ENCODE measurements at regions of chr2 and their contacts with region 1.

Region 1: DNA sequence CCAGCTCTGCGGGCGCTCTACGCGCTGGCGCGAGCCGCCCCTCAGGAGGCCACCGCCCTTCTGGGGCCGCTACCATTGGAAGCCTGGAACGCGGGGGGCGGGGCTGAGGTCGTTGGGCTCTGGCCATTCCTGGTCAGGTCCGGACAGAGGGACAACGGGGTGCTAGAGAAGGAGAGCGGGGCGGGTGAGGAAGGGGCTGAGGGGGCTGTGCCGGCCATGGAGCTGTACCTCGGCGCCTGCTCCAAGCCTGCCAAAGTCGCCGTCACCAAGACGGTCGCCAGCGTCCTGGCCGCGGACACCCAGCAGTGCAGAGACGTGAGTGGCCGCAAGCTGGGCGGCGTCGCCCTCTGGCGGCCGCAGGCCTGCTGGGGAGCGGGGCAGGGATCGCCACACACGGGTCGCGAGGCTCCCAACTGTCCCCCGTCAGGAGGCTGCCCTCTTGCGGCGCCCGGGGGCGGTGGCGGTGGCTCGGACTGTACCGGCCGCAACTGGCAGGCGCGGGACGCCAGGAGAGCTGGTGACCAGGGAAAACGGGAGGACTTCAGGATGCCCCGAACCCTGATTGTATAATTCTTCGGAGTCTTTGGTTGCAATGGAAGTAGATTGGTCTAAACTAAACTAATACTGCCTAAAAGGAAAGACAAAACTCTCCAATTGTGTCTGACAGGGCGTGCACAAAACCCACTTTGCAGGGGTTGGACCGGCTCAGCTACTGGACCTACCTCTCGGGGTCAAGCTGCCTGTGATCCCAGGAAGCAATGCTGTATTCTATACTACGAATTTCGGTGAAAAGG is at the start of gene FSIP2:
- DNase-seq: peak; percentile 89 to 98
- H3K4me3 ChIP-seq: peak within 1 kb of the TSS; percentile 50 to 75 (median 61)
- H3K27ac ChIP-seq: no peak within 1 kb of the TSS; the same call in 1 of the 2 replicates
- H3K4me1 ChIP-seq: no peaks in the 10 kb centered on the region; a peak in 3 of 7 replicates
- H3K27me3 ChIP-seq: no peaks in the 10 kb centered on the region; a peak in 1 of 7 replicates
- CTCF ChIP-seq: peak; percentile 100
- EP300 ChIP-seq: 0 out of 3 replicates have a peak, but pooled peaks of 1 of the 2 experiments have one; percentile 50
- POLR2A ChIP-seq: peak in 1 of 2 experiments; percentile 29; a peak in 1 of 3 replicates
- RAD21 ChIP-seq: peak; percentile 98
- total RNA-seq, gene FSIP2: 1.4 and 1.7 TPM in 2 replicates

Region 2: GRCh38 chr2:185208261-185208660 is 530.6 kb before region 1 on chr2:
- CTCF ChIA-PET with region 1: interaction called, 42 read pairs
- POLR2A ChIA-PET with region 1: no interaction called
- DNase-seq: peak; percentile 23 to 65
- H3K4me3 ChIP-seq: no peak overlapping the region
- H3K27ac ChIP-seq: no peak overlapping the region
- H3K4me1 ChIP-seq: no peaks in the 10 kb centered on the region
- H3K27me3 ChIP-seq: no peaks in the 10 kb centered on the region
- CTCF ChIP-seq: peak; percentile 58 to 84 (median 75)
- EP300 ChIP-seq: no peak
- POLR2A ChIP-seq: no peak
- RAD21 ChIP-seq: peak; percentile 96

Region 3: DNA sequence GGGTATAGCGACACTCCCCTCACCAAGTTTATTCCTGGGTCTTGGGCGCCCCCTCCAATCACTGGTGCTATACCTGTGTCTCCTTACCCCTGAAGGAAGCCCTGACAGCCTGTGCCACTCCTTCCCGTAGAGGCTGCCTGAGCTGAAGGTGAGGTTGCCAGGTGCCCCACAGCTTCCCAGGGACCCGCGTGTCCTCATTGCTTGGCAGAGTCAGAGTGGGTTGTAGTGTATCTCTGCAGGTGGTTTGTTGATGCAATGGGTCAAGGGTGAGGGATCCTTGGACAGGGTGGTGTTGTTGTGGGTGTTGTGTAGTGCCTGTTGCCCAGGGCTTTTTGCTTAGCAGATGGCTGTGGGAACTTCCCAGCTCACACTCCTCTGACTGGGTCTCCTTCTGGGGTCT is 439.0 kb before region 1 on chr2:
- CTCF ChIA-PET with region 1: interaction called, 89 read pairs
- POLR2A ChIA-PET with region 1: no interaction called
- DNase-seq: no peak
- H3K4me3 ChIP-seq: no peak overlapping the region
- H3K27ac ChIP-seq: no peak overlapping the region
- H3K4me1 ChIP-seq: no peaks in the 10 kb centered on the region
- H3K27me3 ChIP-seq: no peaks in the 10 kb centered on the region
- CTCF ChIP-seq: no peak
- EP300 ChIP-seq: no peak
- POLR2A ChIP-seq: no peak
- RAD21 ChIP-seq: no peak

Region 4: DNA sequence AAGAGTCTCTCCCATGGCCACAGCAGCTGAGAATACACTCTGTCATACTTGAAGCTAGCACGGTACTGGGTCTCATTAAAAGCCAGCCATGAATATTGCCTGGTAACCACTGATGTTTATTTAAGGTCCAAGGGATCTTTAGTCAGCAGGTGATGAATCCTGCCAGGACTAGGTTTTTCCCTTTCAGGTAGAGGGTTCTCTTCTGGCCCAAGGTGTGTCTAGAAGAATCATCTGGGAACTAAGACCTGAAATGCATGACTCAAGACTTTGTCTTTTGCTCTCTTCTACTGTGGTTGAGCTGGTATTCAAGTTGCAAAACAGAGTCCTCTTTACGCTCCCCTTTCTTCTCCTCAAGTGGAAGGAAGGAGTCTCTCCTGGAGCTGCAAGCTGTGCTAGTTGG is 400.8 kb before region 1 on chr2:
- CTCF ChIA-PET with region 1: interaction called, 47 read pairs
- POLR2A ChIA-PET with region 1: no interaction called
- DNase-seq: no peak
- H3K4me3 ChIP-seq: no peak overlapping the region
- H3K27ac ChIP-seq: no peak overlapping the region
- H3K4me1 ChIP-seq: no peaks in the 10 kb centered on the region
- H3K27me3 ChIP-seq: no peaks in the 10 kb centered on the region
- CTCF ChIP-seq: no peak
- EP300 ChIP-seq: no peak
- POLR2A ChIP-seq: no peak
- RAD21 ChIP-seq: no peak

Region 5: DNA sequence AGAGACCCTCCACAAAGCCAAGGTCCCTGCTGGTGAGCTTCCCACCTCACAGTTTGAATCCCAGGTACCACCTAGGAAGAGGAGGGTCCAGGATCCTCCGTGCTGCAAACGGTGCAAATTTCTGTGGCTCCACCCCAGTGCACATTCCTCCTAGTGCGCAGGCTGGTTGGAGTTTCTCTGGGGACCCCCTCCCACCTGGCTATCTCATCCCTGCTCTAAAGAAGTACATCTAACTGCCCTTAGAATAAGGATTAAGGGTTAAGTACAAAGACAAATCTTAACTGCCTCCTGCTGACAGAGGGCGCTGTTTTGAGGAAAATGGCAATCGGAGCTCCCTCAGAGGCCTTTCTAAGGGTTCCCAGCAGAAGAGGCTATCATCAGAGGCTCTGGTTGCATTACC is 109.9 kb before region 1 on chr2:
- CTCF ChIA-PET with region 1: interaction called, 17 read pairs
- POLR2A ChIA-PET with region 1: no interaction called
- DNase-seq: peak; percentile 54 to 84
- H3K4me3 ChIP-seq: no peak overlapping the region
- H3K27ac ChIP-seq: no peak overlapping the region
- H3K4me1 ChIP-seq: peaks cover 0 to 3% (median 0%) of the 10 kb centered on the region in 4 experiments; a peak in 1 of 7 replicates
- H3K27me3 ChIP-seq: no peaks in the 10 kb centered on the region
- CTCF ChIP-seq: peak; percentile 19 to 67 (median 61)
- EP300 ChIP-seq: no peak
- POLR2A ChIP-seq: no peak
- RAD21 ChIP-seq: peak; percentile 45 to 59

Region 6: GRCh38 chr2:185835974-185836373 is 97.1 kb after region 1 on chr2:
- CTCF ChIA-PET with region 1: no interaction called
- POLR2A ChIA-PET with region 1: no interaction called
- DNase-seq: no peak
- H3K4me3 ChIP-seq: no peak overlapping the region
- H3K27ac ChIP-seq: no peak overlapping the region
- H3K4me1 ChIP-seq: no peaks in the 10 kb centered on the region
- H3K27me3 ChIP-seq: no peaks in the 10 kb centered on the region
- CTCF ChIP-seq: no peak
- EP300 ChIP-seq: peak in 1 of 2 experiments; percentile 50; a peak in 1 of 3 replicates
- POLR2A ChIP-seq: no peak
- RAD21 ChIP-seq: no peak